ENCODE measurements at regions of chr4 and their contacts with region 1.

Region 1: GRCh38 chr4:1726146-1726934 is 5.0 kb downstream of the TACC3 start:
- DNase-seq: peak; percentile 80 to 98 (median 90)
- ATAC-seq: peak; percentile 46 to 83 (median 77)
- H3K4me3 ChIP-seq: no peak overlapping the region
- H3K27ac ChIP-seq: peak overlapping the region in 2 of 4 donors; percentile 61 to 62
- H3K4me1 ChIP-seq: peaks cover 6 to 9% (median 8%) of the 10 kb centered on the region in 3 donors
- H3K27me3 ChIP-seq: no peaks in the 10 kb centered on the region
- CTCF ChIP-seq: peak; percentile 97 to 99 (median 98)

Region 2: GRCh38 chr4:1356181-1356998 is 369.9 kb before region 1 on chr4:
- intact Hi-C with region 1: no loop called
- DNase-seq: peak in 4 of 6 donors; percentile 63 to 84 (median 74)
- ATAC-seq: peak in 3 of 4 donors; percentile 51 to 58 (median 52)
- H3K4me3 ChIP-seq: no peak overlapping the region
- H3K27ac ChIP-seq: no peak overlapping the region
- H3K4me1 ChIP-seq: no peaks in the 10 kb centered on the region
- H3K27me3 ChIP-seq: no peaks in the 10 kb centered on the region
- CTCF ChIP-seq: peak; percentile 58 to 74 (median 69)

Region 3: GRCh38 chr4:1547856-1548826 is 178.2 kb before region 1 on chr4:
- intact Hi-C with region 1: no loop called
- DNase-seq: peak in 2 of 6 donors; percentile 12 to 58
- ATAC-seq: peak in 3 of 4 donors; percentile 11 to 27 (median 27)
- H3K4me3 ChIP-seq: peak overlapping the region in 1 of 4 donors; percentile 21
- H3K27ac ChIP-seq: no peak overlapping the region
- H3K4me1 ChIP-seq: no peaks in the 10 kb centered on the region
- H3K27me3 ChIP-seq: peaks cover 0 to 3% (median 0%) of the 10 kb centered on the region in 4 donors
- CTCF ChIP-seq: no peak

Region 4: GRCh38 chr4:1693129-1693896 is 33.0 kb before region 1 on chr4:
- intact Hi-C with region 1: loop called in 1 of 3 experiments (anchors 5 kb)
- DNase-seq: peak; percentile 59 to 86 (median 78)
- ATAC-seq: peak; percentile 76 to 99 (median 96)
- H3K4me3 ChIP-seq: no peak overlapping the region
- H3K27ac ChIP-seq: no peak overlapping the region
- H3K4me1 ChIP-seq: no peaks in the 10 kb centered on the region
- H3K27me3 ChIP-seq: no peaks in the 10 kb centered on the region
- CTCF ChIP-seq: peak; percentile 69 to 93 (median 86)

Region 5: DNA sequence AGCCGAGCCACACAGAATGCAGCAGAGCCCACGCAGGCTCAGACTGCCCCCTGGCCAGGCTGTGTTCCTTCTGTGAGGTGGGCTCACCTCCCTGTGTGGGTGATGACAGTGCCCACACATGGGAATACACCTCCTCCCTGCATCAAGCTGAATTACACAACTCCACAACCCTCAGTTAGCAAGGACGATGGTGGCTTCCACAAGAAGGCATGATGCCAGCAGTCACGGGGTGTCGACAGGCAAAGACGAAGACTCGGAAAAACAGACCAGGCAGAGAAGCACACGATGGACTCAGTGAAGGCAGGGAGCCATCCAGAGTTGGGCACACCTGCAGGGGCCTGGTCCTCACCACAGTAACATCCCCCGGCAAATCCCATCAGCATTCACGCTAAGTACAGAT is 117.5 kb after region 1 on chr4:
- intact Hi-C with region 1: no loop called
- DNase-seq: no peak
- ATAC-seq: peak in 1 of 4 donors; percentile 11
- H3K4me3 ChIP-seq: no peak overlapping the region
- H3K27ac ChIP-seq: no peak overlapping the region
- H3K4me1 ChIP-seq: no peaks in the 10 kb centered on the region
- H3K27me3 ChIP-seq: no peaks in the 10 kb centered on the region
- CTCF ChIP-seq: no peak